OCI-LY7 (cell line): ENCODE measurements at regions of chrX and their contacts with region 1.

Region 1: DNA sequence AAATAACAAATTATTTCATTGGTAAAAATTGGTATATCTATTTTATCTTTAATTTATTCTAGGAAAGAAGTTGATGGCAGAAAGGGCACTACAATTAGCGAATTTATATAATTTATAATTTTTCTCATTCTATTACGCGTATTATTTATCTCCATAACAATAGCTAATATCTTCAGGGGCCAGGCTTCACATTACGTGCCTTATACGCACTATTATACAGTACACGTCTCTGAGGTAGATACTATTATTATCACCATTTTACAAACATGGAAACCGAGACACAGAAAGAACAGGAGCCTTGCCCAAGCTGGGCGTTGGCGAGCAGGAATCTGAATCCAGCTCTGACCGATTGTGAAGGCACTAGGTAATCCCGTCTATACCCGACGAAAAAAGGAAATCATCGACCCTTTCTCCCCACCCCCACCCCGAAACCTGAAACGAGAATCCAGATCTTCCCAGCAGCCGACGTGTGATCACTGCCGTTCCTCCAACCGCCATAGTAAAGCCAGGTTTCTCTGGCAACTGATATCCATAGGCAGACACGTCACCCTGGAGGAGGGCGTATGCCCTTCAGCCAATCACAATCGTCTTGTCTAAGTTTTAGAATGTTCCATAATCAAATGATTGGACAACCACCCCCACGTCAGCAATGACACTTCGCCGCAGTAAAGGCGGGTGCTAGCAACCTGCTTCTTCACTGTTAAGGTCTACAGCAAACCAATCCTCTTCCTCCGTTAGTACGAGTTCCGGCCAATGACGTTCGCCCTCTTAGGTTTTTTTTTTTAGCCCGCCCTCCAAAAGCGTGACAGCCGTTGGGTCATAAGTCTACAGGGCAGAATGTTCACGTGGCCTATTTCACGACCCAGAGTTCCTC is at the start of gene MORF4L2:
- DNase-seq: peak; percentile 95
- H3K4me3 ChIP-seq: peak within 1 kb of the TSS; percentile 92
- H3K27ac ChIP-seq: peak within 1 kb of the TSS; percentile 90
- H3K4me1 ChIP-seq: peaks cover 16% of the 10 kb centered on the region
- CTCF ChIP-seq: no peak
- total RNA-seq, gene MORF4L2: 165 and 201 TPM in 2 replicates

Region 2: GRCh38 chrX:103533511-103534216 is 152.8 kb before region 1 on chrX:
- CTCF ChIA-PET with region 1: no interaction called
- POLR2A ChIA-PET with region 1: no interaction called
- intact Hi-C with region 1: loop called (anchors 2 kb)
- DNase-seq: peak; percentile 59
- H3K4me3 ChIP-seq: no peak overlapping the region
- H3K27ac ChIP-seq: no peak overlapping the region
- H3K4me1 ChIP-seq: no peaks in the 10 kb centered on the region
- CTCF ChIP-seq: peak; percentile 84

Region 3: DNA sequence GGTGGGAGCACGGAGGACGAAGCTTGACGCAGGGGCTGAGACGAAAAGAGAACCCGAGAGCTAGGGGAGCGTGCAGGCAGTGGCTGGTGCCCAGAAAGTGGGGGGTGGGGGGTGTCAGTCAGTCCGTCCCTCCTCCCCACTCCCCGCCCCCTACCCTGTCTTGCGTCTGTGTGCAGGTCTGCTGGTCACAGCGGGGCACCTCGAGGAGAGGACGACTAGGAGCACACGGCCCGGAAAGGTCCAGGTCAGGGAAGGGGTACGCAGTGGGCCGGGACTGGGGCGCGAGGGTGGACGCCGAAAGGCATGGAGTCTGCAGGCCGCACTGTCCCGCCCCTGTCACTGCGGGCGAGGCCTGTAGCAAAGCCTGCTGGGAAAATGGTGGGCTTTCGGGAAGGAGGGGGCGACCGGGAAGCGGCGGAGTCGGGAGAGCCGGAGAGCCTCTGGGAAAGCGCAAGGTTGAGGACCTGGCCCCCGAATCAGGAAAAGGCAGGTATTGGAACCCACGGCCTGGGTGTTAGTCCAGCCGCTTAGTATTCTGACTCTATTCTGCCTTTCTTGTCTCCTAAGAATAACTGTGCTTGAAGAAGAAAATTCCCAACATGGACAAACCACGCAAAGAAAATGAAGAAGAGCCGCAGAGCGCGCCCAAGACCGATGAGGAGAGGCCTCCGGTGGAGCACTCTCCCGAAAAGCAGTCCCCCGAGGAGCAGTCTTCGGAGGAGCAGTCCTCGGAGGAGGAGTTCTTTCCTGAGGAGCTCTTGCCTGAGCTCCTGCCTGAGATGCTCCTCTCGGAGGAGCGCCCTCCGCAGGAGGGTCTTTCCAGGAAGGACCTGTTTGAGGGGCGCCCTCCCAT is 56.9 kb before region 1 on chrX:
- CTCF ChIA-PET with region 1: no interaction called
- POLR2A ChIA-PET with region 1: interaction called, 3 read pairs
- intact Hi-C with region 1: loop called (anchors 2 kb)
- DNase-seq: peak; percentile 11
- H3K4me3 ChIP-seq: peak overlapping the region; percentile 80
- H3K27ac ChIP-seq: peak overlapping the region; percentile 81
- H3K4me1 ChIP-seq: peaks cover 21% of the 10 kb centered on the region
- CTCF ChIP-seq: peak; percentile 63

Region 4: GRCh38 chrX:103789004-103789403 is 102.6 kb after region 1 on chrX:
- CTCF ChIA-PET with region 1: no interaction called
- POLR2A ChIA-PET with region 1: no interaction called
- intact Hi-C with region 1: loop called (anchors 1 kb)
- DNase-seq: peak; percentile 73
- H3K4me3 ChIP-seq: peak overlapping the region; percentile 39
- H3K27ac ChIP-seq: peak overlapping the region; percentile 92
- H3K4me1 ChIP-seq: peaks cover 35% of the 10 kb centered on the region
- CTCF ChIP-seq: no peak

Region 5: GRCh38 chrX:103817502-103817901 is 131.1 kb after region 1 on chrX:
- CTCF ChIA-PET with region 1: no interaction called
- POLR2A ChIA-PET with region 1: no interaction called
- intact Hi-C with region 1: loop called (anchors 1 kb)
- DNase-seq: peak; percentile 71
- H3K4me3 ChIP-seq: no peak overlapping the region
- H3K27ac ChIP-seq: no peak overlapping the region
- H3K4me1 ChIP-seq: peaks cover 8% of the 10 kb centered on the region
- CTCF ChIP-seq: peak; percentile 76

Region 6: DNA sequence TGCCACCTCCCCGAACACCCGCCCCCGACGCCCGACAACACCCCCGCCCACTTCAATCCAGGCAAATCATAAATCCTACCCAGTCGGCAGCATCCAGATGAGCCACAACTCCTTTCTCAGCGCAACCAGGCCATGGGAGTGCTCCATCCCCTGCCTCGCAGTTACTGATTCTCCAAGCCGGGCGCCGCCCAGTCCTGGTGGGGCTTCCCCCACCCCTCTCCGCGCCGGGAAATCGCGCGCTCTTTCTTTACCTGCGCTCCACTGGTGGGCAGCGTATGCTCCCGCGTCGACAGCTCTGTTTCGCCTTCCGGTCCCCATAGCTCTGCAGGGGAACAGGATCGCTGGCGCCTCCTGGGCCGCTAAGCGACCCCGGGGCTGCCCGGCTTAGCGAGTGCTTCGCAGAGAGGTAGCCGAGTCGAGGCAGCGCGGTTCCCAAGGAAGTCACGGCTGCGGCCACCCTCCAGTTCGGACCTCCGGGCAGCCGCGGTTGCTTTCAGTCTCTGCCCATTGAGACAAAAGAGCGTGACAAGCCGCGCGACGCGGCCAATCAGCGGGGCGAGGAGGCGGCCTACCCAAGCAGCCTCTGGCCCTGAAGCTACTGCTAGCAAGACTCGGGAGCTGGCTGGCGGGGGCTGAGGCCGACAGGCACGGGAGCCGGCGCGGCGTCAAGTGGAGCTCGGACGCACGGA is 232.3 kb after region 1 on chrX:
- CTCF ChIA-PET with region 1: no interaction called
- POLR2A ChIA-PET with region 1: no interaction called
- intact Hi-C with region 1: loop called (anchors 1 kb)
- DNase-seq: peak; percentile 75
- H3K4me3 ChIP-seq: peak overlapping the region; percentile 78
- H3K27ac ChIP-seq: peak overlapping the region; percentile 84
- H3K4me1 ChIP-seq: peaks cover 12% of the 10 kb centered on the region
- CTCF ChIP-seq: no peak

Region 7: GRCh38 chrX:104165894-104166737 is 479.7 kb after region 1 on chrX and contains the start of gene FAM199X:
- CTCF ChIA-PET with region 1: no interaction called
- POLR2A ChIA-PET with region 1: no interaction called
- intact Hi-C with region 1: loop called (anchors 2 kb)
- DNase-seq: peak; percentile 88
- H3K4me3 ChIP-seq: peak within 1 kb of the TSS; percentile 94
- H3K27ac ChIP-seq: peak within 1 kb of the TSS; percentile 55
- H3K4me1 ChIP-seq: peaks cover 23% of the 10 kb centered on the region
- CTCF ChIP-seq: peak; percentile 69
- total RNA-seq, gene FAM199X: 10.6 and 10.8 TPM in 2 replicates